ENCODE measurements at regions of chr7 and their contacts with region 1.

Region 1: DNA sequence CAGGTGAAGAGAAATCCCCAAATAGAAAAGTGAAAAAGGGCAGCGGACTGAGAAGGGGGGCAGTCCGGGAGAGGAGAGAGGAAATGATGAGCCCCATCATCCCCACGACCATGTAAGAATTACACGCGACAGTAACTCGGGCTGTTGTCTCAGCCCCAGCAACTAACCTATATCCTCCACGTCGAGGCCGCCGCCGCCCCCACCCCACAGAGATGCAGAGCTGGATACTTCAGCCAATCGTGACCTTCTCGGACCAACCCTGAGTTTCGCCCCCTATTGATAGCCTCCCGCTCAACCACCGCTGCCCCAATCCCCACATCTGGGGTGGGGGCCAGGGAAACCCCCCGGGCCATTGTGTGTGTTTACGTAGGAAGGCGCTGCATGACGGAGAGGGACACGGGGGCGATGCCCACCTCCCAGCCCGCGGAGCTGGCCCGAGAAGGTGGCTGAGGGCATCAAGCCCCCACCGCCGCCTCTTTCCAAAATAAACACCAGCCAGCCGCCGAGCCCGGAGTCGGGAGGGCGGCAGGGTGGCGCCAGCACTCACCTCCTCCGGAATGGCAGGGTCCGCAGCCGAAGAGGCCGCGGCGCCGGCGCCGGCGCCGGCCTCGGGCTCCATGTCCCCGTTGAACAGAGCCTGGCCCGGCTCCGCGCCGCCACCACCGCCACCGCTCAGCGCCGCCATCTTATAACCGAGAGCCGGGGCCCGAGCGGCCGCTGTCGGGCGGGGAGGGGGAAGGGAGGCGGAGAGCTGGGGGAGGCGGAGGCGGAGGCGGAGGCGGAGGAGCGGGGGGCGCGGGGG is 509 bp downstream of the BRAF start:
- DNase-seq: peak; percentile 92
- H3K4me3 Mint-ChIP-seq: no peak overlapping the region
- H3K27ac Mint-ChIP-seq: no peak overlapping the region
- H3K4me1 Mint-ChIP-seq: peaks cover 14% of the 10 kb centered on the region
- H3K27me3 Mint-ChIP-seq: peaks cover 11% of the 10 kb centered on the region

Region 2: GRCh38 chr7:140551355-140552239 is 372.6 kb before region 1 on chr7:
- intact Hi-C with region 1: no loop called
- DNase-seq: no peak
- H3K4me3 Mint-ChIP-seq: no peak overlapping the region
- H3K27ac Mint-ChIP-seq: no peak overlapping the region
- H3K4me1 Mint-ChIP-seq: no peaks in the 10 kb centered on the region
- H3K27me3 Mint-ChIP-seq: peaks cover 5% of the 10 kb centered on the region

Region 3: GRCh38 chr7:140673063-140673773 is 251.0 kb before region 1 on chr7:
- intact Hi-C with region 1: loop called (anchors 1 kb)
- DNase-seq: peak; percentile 90
- H3K4me3 Mint-ChIP-seq: peak overlapping the region; percentile 89
- H3K27ac Mint-ChIP-seq: peak overlapping the region; percentile 87
- H3K4me1 Mint-ChIP-seq: peaks cover 31% of the 10 kb centered on the region
- H3K27me3 Mint-ChIP-seq: peaks cover 4% of the 10 kb centered on the region

Region 4: DNA sequence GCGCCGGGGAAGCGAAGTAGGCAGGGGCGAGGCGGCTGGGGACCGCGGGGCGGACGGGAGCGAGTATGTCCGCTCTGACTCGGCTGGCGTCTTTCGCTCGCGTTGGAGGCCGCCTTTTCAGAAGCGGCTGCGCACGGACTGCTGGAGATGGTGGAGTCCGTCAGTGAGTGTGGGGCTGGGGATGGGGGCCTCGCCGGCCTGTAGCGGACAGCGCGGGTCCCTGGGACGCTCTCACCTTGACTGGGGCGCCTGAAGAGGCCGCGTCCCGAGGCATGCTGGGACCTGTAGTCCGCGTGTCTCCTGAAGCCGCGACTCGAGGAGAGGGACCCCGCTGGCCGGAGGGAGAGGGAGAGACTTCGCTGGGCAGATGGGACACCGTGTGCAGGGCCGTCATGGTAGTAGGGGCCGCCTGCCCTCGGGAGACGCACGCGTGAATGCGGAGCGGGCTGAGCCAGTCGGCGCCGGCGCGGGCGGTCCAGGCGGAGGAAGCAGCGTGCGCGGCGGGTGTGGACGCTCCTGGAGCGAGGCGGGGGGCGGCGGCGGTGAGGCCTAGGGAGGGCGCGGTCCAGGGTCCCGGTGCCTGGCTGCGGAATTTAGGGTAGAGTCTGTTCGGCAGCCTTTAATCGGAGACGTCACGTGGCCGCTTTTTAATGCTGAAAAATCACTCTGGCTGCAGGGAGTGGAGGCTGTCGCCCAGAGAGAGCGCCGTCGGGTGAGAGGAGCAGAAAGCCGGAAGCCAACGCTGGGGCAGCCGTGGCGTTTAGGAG is 227.4 kb before region 1 on chr7 and contains the start of gene NDUFB2:
- intact Hi-C with region 1: loop called (anchors 2 kb)
- DNase-seq: peak; percentile 97
- H3K4me3 Mint-ChIP-seq: peak within 1 kb of the TSS; percentile 99
- H3K27ac Mint-ChIP-seq: peak within 1 kb of the TSS; percentile 99
- H3K4me1 Mint-ChIP-seq: peaks cover 27% of the 10 kb centered on the region
- H3K27me3 Mint-ChIP-seq: no peaks in the 10 kb centered on the region
- total RNA-seq, gene NDUFB2: 183 and 192 TPM in 2 replicates

Region 5: DNA sequence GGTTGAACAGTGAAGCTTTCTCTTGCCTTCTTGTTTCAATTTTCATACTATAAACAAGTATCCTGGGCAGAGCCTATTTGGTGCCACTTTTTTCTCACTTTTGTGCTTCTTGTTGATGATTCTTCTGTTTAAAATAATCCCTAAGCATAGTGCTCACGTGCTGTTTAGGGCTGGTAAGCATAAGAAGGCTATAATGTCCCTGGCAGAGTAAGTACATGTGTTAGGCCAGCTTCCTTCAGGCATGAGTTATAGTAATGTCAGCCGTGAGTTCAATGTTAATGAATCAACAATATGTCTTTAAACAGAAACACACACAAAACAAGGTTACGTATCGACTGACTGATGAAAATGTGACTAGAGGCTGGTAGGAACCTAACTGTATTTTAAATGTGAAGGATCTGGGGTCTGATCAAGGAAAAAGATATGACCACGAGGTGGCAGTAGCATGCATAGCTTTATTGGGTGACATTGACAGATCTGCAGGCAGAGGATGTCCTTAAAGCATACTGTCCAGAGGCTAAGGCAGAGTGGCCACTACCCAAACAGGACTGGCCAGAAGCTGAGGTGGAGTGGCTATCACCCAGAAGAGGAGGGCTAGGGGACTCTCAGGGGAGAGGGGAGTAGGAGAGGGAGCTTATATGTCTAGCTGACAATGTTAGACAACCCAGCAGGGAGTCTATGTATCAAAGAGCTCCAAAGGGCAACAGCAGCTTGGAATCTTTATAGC is 113.2 kb before region 1 on chr7:
- intact Hi-C with region 1: loop called (anchors 1 kb)
- DNase-seq: peak; percentile 90
- H3K4me3 Mint-ChIP-seq: no peak overlapping the region
- H3K27ac Mint-ChIP-seq: no peak overlapping the region
- H3K4me1 Mint-ChIP-seq: no peaks in the 10 kb centered on the region
- H3K27me3 Mint-ChIP-seq: no peaks in the 10 kb centered on the region

Region 6: GRCh38 chr7:140876519-140877248 is 47.5 kb before region 1 on chr7:
- intact Hi-C with region 1: loop called (anchors 1 kb)
- DNase-seq: no peak
- H3K4me3 Mint-ChIP-seq: no peak overlapping the region
- H3K27ac Mint-ChIP-seq: no peak overlapping the region
- H3K4me1 Mint-ChIP-seq: peaks cover 21% of the 10 kb centered on the region
- H3K27me3 Mint-ChIP-seq: peaks cover 2% of the 10 kb centered on the region

Region 7: DNA sequence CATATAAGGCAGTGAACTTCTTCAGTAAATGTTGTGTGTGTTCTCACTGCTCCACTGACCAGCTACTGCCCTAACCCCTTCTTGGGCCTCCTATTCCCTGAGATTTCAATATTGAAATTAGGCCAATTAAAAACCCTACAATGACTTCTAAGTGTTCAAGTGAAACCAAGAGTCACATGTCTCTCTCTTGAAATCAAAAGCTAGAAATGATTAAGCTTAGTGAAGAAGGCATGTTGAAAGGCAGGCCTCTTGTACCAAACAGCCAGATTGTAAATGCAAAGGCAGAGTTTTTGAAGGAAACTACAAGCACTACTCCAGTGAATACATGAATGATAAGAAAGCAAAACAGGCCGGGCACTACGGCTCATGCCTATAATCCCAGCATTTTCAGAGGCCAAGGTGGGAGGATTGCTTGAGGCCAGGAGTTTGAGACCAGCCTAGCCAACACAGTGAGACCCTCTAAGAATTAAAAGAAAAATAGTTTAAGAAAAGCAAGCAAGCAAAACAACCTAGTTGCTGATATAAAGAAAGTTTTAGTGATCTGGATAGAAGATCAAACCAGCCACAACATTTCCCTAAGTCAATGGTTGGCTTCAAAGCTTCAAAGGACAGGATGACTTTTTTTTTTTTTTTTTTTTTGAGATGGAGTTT is 21.8 kb before region 1 on chr7:
- intact Hi-C with region 1: loop called (anchors 1 kb)
- DNase-seq: peak; percentile 66
- H3K4me3 Mint-ChIP-seq: peak overlapping the region; percentile 55
- H3K27ac Mint-ChIP-seq: peak overlapping the region; percentile 82
- H3K4me1 Mint-ChIP-seq: peaks cover 29% of the 10 kb centered on the region
- H3K27me3 Mint-ChIP-seq: no peaks in the 10 kb centered on the region

Measured in activated CD4-positive, alpha-beta T cell treated with anti-CD3 and anti-CD28 coated beads, Interleukin-2, amount 10 ng/mL, durations not matched to agents 24 days and 14 days (primary cell).